CD8-positive, alpha-beta T cell (primary cell): ENCODE measurements at regions of chr20 and their contacts with region 1.

Region 1: DNA sequence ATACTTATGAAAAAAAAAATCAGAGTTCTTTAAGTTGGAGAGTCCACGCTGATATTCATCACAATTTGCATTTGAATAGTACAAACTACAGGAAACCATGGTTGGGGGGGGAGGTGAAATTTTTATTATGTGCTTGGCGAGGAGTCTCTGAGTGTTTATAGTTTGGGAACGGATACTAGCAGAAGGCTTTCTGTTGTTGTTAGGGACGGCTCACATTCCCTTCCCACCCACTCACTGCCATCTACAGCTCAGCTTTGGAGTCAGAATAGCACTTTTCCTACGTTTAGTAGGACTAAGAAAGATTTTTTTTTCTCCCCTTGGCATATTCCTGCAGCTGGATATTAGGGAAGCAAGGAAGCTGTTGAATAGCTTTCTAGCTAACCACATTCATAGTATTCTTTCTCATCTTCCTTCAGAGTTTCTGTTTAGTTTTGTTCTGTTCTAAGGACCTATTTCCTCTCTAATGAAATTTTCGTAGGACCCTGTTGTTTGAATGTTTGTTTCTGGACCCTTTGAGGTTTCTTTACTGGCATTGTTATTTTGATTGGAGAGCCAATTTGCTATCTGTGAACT is 235.1 kb upstream of the ZNF217 start:
- DNase-seq: peak in 2 of 9 experiments; percentile 27 to 51
- ATAC-seq: peak; percentile 23
- H3K4me3 ChIP-seq: peak overlapping the region; percentile 28 to 33
- H3K4me3 Mint-ChIP-seq: peak overlapping the region; percentile 86
- H3K27ac ChIP-seq: peak overlapping the region; percentile 47 to 88
- H3K27ac Mint-ChIP-seq: peak overlapping the region; percentile 97
- H3K4me1 ChIP-seq: peaks cover 34% of the 10 kb centered on the region
- H3K4me1 Mint-ChIP-seq: peaks cover 57% of the 10 kb centered on the region
- H3K27me3 ChIP-seq: no peaks in the 10 kb centered on the region
- H3K27me3 Mint-ChIP-seq: no peaks in the 10 kb centered on the region
- CTCF ChIP-seq: no peak

Region 2: GRCh38 chr20:53789989-53790675 is 38.6 kb before region 1 on chr20:
- CTCF ChIA-PET with region 1: no interaction called
- POLR2A ChIA-PET with region 1: no interaction called
- intact Hi-C with region 1: no loop called
- DNase-seq: no peak
- ATAC-seq: no peak
- H3K4me3 ChIP-seq: no peak overlapping the region
- H3K4me3 Mint-ChIP-seq: no peak overlapping the region
- H3K27ac ChIP-seq: no peak overlapping the region
- H3K27ac Mint-ChIP-seq: no peak overlapping the region
- H3K4me1 ChIP-seq: no peaks in the 10 kb centered on the region
- H3K4me1 Mint-ChIP-seq: peaks cover 2% of the 10 kb centered on the region
- H3K27me3 ChIP-seq: no peaks in the 10 kb centered on the region
- H3K27me3 Mint-ChIP-seq: no peaks in the 10 kb centered on the region
- CTCF ChIP-seq: no peak

Region 3: GRCh38 chr20:53800808-53801604 is 27.8 kb before region 1 on chr20:
- CTCF ChIA-PET with region 1: no interaction called
- POLR2A ChIA-PET with region 1: no interaction called
- intact Hi-C with region 1: no loop called
- DNase-seq: no peak
- ATAC-seq: no peak
- H3K4me3 ChIP-seq: no peak overlapping the region
- H3K4me3 Mint-ChIP-seq: no peak overlapping the region
- H3K27ac ChIP-seq: no peak overlapping the region
- H3K27ac Mint-ChIP-seq: no peak overlapping the region
- H3K4me1 ChIP-seq: no peaks in the 10 kb centered on the region
- H3K4me1 Mint-ChIP-seq: no peaks in the 10 kb centered on the region
- H3K27me3 ChIP-seq: no peaks in the 10 kb centered on the region
- H3K27me3 Mint-ChIP-seq: no peaks in the 10 kb centered on the region
- CTCF ChIP-seq: no peak

Region 4: DNA sequence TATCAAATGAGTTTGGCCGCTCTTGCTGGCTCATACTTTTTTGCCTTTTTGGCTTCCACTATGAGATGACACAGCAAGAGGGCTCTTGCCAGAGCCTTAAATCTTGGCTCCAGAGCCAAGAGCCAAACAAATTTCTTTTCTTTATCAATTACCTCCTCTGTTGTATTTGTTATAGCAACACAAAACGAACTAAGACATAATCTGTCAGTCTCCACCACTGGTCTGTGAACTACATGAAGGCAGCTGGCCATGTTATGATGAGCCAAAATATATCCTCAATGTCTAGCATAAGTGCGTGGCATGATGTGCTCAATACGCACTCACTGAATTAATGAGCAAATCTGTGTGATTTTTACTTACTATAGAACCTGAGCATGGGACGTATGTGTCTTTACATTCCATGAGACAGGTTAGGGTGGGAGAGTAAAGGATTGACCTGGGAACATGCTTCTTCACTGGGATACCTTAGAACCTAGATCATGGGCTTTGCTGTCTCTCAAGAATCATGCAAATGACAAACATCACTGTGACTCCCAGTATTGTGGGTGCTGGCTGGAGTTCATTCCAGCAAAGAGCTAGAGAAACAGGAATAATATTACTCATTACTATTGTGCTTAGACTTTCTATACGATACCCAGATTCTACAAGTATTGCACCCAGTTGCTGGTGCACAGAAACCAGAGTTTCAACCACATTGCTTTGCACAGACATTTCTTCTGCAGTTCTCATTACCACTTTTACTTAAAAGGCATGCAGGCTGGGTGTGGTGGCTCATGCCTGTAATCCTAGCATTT is 14.9 kb before region 1 on chr20:
- CTCF ChIA-PET with region 1: no interaction called
- POLR2A ChIA-PET with region 1: no interaction called
- intact Hi-C with region 1: loop called in 1 of 2 experiments (anchors 2 kb)
- DNase-seq: no peak
- ATAC-seq: no peak
- H3K4me3 ChIP-seq: no peak overlapping the region
- H3K4me3 Mint-ChIP-seq: peak overlapping the region; percentile 5
- H3K27ac ChIP-seq: peak overlapping the region in 1 of 2 experiments; percentile 46
- H3K27ac Mint-ChIP-seq: peak overlapping the region; percentile 37
- H3K4me1 ChIP-seq: peaks cover 21% of the 10 kb centered on the region
- H3K4me1 Mint-ChIP-seq: peaks cover 38% of the 10 kb centered on the region
- H3K27me3 ChIP-seq: no peaks in the 10 kb centered on the region
- H3K27me3 Mint-ChIP-seq: no peaks in the 10 kb centered on the region
- CTCF ChIP-seq: no peak